ENCODE measurements at regions of chrX and their contacts with region 1.

Region 1: DNA sequence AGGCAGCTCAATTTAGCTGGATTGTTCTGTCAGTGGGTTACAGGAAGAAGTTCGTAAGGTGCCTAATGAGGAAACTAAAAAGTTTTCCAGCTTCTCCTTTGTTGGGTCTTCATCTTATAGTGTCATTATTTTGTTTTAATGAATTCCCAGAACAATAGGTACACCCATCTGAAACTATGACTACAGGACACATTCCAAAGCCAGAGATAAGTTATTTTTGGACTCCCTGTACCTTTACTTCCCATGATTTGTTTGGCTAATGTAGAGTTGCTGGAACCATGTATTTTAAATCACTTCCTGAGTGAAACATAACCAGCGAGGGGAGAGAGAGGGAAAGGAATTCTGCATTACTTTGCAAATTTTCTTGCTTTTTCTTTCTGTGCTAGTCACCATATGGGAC is 114.0 kb downstream of the CLCN5 start:
- DNase-seq: no peak
- ATAC-seq: no peak

Region 2: GRCh38 chrX:49958727-49959485 is 77.5 kb before region 1 on chrX:
- intact Hi-C with region 1: loop called (anchors 2 kb)
- DNase-seq: no peak
- ATAC-seq: no peak

Region 3: GRCh38 chrX:50075630-50076339 is 39.4 kb after region 1 on chrX:
- intact Hi-C with region 1: no loop called
- DNase-seq: no peak
- ATAC-seq: no peak